ENCODE measurements at regions of chr1 and their contacts with region 1.

Region 1: GRCh38 chr1:10209905-10210810 is at the start of gene KIF1B:
- DNase-seq: peak; percentile 99
- H3K4me3 ChIP-seq: peak within 1 kb of the TSS; percentile 95 to 100 (median 98)
- H3K27ac ChIP-seq: peak within 1 kb of the TSS; percentile 100
- H3K4me1 ChIP-seq: peaks cover 31 to 50% (median 45%) of the 10 kb centered on the region in 4 donors
- H3K27me3 ChIP-seq: no peaks in the 10 kb centered on the region
- CTCF ChIP-seq: peak; percentile 98 to 99 (median 99)
- EP300 ChIP-seq: no peak
- POLR2A ChIP-seq: peak; percentile 93
- total RNA-seq, gene KIF1B: 53.0 to 78.2 (median 64.8) TPM

Region 2: DNA sequence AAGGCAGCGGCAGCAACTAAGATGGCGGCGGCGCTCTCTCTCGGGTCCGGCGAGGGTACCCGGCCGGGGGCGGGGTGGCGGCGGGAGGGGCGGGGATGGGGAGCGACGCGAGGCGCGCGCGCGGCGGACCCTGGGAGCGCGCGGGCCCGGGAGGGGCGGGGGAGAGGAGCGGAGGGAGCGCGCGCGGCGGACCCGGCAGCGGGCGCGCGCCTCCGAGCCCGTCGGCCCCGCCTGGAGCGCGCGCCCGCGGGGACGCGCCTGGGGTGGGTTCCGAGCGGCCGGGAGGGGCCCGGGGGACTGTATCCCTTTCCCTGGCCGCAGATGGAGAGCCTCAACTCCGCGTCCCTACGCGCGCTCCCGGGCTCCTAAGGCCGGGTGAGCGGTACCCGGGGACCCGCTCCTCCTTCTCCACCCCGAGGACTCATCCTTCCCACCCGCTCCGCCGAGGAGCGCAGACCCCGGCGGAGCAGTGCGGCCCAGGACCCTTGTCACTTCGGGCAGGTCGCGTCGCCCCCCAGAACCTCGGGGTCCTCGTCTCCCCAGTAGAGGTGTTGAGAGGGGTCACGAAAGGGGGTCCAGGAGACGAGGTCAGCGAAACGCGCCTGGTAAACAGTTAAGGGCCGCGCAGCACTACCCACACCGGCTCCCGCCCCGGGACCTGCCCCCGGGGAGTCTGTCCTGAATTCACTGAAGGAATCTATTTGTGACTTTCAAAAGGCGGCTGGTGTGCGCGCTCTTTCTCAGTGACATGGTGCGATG is 386.0 kb before region 1 on chr1 and contains the start of gene CLSTN1:
- intact Hi-C with region 1: no loop called
- DNase-seq: no peak
- H3K4me3 ChIP-seq: peak within 1 kb of the TSS; percentile 84 to 93 (median 91)
- H3K27ac ChIP-seq: peak within 1 kb of the TSS; percentile 90 to 98 (median 92)
- H3K4me1 ChIP-seq: peaks cover 23 to 53% (median 42%) of the 10 kb centered on the region in 4 donors
- H3K27me3 ChIP-seq: no peaks in the 10 kb centered on the region
- CTCF ChIP-seq: no peak
- EP300 ChIP-seq: no peak
- POLR2A ChIP-seq: peak; percentile 22
- total RNA-seq, gene CLSTN1: 47.1 to 109 (median 72.3) TPM

Region 3: GRCh38 chr1:10253755-10254154 is 43.6 kb after region 1 on chr1:
- intact Hi-C with region 1: loop called (anchors 5 kb)
- DNase-seq: no peak
- H3K4me3 ChIP-seq: no peak overlapping the region
- H3K27ac ChIP-seq: peak overlapping the region; percentile 59 to 71 (median 70)
- H3K4me1 ChIP-seq: peaks cover 49 to 78% (median 66%) of the 10 kb centered on the region in 4 donors
- H3K27me3 ChIP-seq: no peaks in the 10 kb centered on the region
- CTCF ChIP-seq: no peak
- EP300 ChIP-seq: no peak
- POLR2A ChIP-seq: no peak

Region 4: GRCh38 chr1:10283318-10283984 is 73.3 kb after region 1 on chr1:
- intact Hi-C with region 1: loop called (anchors 10 kb)
- DNase-seq: no peak
- H3K4me3 ChIP-seq: no peak overlapping the region
- H3K27ac ChIP-seq: peak overlapping the region in 1 of 4 donors; percentile 3
- H3K4me1 ChIP-seq: peaks cover 26 to 48% (median 39%) of the 10 kb centered on the region in 4 donors
- H3K27me3 ChIP-seq: no peaks in the 10 kb centered on the region
- CTCF ChIP-seq: no peak
- EP300 ChIP-seq: no peak
- POLR2A ChIP-seq: no peak

Region 5: GRCh38 chr1:10338047-10338446 is 127.9 kb after region 1 on chr1:
- intact Hi-C with region 1: loop called (anchors 5 kb)
- DNase-seq: no peak
- H3K4me3 ChIP-seq: no peak overlapping the region
- H3K27ac ChIP-seq: no peak overlapping the region
- H3K4me1 ChIP-seq: peaks cover 0 to 13% (median 2%) of the 10 kb centered on the region in 4 donors
- H3K27me3 ChIP-seq: no peaks in the 10 kb centered on the region
- CTCF ChIP-seq: peak; percentile 63 to 82 (median 82)
- EP300 ChIP-seq: no peak
- POLR2A ChIP-seq: no peak

Region 6: DNA sequence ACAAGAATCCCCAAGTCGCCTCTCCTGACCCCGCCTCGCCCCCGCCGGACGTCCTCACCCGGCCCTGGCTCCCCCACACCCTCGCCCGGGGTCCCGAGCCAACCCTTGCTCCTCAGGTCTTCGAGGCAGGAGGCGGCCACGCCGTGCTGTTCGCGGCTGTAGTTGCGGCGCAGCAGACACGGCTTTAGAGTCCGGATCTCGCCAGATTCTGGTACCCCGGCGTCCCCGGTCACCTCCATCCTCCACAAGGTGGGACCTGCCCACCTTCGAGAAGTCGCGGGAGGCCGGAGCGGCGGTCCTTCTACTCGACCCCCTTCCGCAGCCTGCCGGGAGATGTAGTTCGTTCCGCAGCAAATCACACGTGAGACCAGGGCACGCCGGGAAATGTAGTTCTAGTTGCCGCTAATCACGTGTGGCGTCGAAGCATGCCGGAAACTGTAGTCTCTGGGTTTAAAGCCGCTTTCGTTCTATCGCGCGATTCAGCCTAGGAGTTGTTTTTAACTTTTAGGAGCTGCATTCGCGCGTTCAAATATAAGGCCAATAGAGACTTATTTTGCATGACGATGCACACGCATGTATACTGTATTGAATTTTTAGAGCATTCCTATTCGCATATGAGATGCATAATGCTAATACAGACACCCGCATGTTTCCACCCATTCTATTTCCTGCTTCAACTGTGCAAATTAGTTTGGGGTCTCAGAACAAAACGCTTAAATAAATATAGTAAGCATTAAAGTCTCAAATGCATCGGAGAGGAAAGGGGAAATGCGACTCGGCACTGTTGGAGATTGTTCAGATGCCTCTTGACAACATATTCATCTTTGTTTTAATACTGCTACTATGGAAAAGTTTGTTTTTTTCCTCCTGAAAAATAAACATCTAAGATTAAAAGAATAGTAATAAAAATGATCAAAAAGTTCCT is 262.3 kb after region 1 on chr1 and contains the start of gene DFFA:
- intact Hi-C with region 1: no loop called
- DNase-seq: peak; percentile 97
- H3K4me3 ChIP-seq: peak within 1 kb of the TSS; percentile 69 to 94 (median 78)
- H3K27ac ChIP-seq: peak within 1 kb of the TSS; percentile 78 to 85 (median 82)
- H3K4me1 ChIP-seq: peaks cover 21 to 46% (median 44%) of the 10 kb centered on the region in 4 donors
- H3K27me3 ChIP-seq: no peaks in the 10 kb centered on the region
- CTCF ChIP-seq: no peak
- EP300 ChIP-seq: no peak
- POLR2A ChIP-seq: no peak
- total RNA-seq, gene DFFA: 17.9 to 32.5 (median 26.0) TPM

Region 7: GRCh38 chr1:11062965-11063401 is 852.8 kb after region 1 on chr1:
- intact Hi-C with region 1: no loop called
- DNase-seq: no peak
- H3K4me3 ChIP-seq: no peak overlapping the region
- H3K27ac ChIP-seq: no peak overlapping the region
- H3K4me1 ChIP-seq: peaks cover 18 to 32% (median 27%) of the 10 kb centered on the region in 4 donors
- H3K27me3 ChIP-seq: no peaks in the 10 kb centered on the region
- CTCF ChIP-seq: no peak
- EP300 ChIP-seq: no peak
- POLR2A ChIP-seq: no peak

Measured in esophagus muscularis mucosa (tissue), 4 donors.